Activated T-helper 1 cell treated with anti-CD3 and anti-CD28 coated beads, Interleukin-12 subunit alpha, Interleukin-12 subunit beta, Interleukin-2, Interleukin-4 antibody, amounts not matched to agents 30 ng/mL and 10 ng/mL and 1 ng/mL, durations not matched to agents 14 hours and 24 hours and 36 hours (primary cell): ENCODE measurements at regions of chr21 and their contacts with region 1.

Region 1: GRCh38 chr21:14591882-14592281 is 45.8 kb upstream of the SAMSN1 start:
- DNase-seq: no peak
- H3K4me3 Mint-ChIP-seq: no peak overlapping the region
- H3K27ac Mint-ChIP-seq: peak overlapping the region; percentile 83
- H3K4me1 Mint-ChIP-seq: peaks cover 54% of the 10 kb centered on the region
- H3K27me3 Mint-ChIP-seq: no peaks in the 10 kb centered on the region

Region 2: GRCh38 chr21:14454016-14455009 is 137.6 kb before region 1 on chr21:
- intact Hi-C with region 1: loop called (anchors 10 kb)
- DNase-seq: no peak
- H3K4me3 Mint-ChIP-seq: peak overlapping the region; percentile 62
- H3K27ac Mint-ChIP-seq: peak overlapping the region; percentile 92
- H3K4me1 Mint-ChIP-seq: peaks cover 74% of the 10 kb centered on the region
- H3K27me3 Mint-ChIP-seq: no peaks in the 10 kb centered on the region

Region 3: DNA sequence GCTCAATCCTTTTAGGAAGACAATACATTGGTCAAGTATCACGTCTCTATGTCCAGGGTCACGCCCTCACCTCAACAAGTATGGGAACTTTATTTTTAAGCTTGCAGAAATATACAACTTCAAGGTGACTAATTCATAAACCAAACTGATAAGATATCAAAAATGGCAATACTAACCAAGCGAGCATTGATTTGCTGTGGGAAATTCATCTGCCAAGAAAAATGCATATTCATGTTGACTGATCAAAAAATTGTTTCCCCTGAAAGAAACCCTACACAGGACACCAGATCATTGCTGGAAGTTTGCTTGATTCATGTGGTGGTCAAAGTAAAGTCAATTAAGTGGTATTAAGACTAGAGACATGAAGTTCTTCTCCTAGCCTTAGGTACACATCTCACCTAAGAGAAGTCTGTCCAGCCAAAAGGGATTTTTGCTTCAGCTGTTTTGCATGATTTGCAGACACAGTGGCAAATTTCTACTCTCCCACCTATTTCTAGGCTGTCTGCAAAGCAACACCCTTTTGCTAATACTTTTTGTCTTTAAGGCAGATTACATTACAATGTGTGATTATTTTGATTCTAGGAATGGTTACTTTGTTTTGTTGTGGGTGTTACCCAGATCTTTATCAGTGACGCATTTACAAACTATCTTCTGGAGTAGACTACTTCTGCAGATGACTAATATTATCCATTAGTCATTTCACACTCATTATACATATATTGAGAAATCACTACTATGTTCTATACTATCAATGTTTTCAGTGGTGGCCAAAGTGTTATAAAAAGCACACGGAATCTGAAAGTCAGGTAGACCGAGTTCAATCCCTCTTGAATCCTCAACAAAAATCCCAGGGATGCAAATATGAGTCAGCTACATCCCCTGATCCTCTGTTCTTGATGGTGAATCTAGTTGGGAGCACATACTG is 58.1 kb before region 1 on chr21:
- intact Hi-C with region 1: loop called (anchors 1 kb)
- DNase-seq: peak; percentile 22
- H3K4me3 Mint-ChIP-seq: peak overlapping the region; percentile 86
- H3K27ac Mint-ChIP-seq: peak overlapping the region; percentile 99
- H3K4me1 Mint-ChIP-seq: peaks cover 79% of the 10 kb centered on the region
- H3K27me3 Mint-ChIP-seq: no peaks in the 10 kb centered on the region

Region 4: DNA sequence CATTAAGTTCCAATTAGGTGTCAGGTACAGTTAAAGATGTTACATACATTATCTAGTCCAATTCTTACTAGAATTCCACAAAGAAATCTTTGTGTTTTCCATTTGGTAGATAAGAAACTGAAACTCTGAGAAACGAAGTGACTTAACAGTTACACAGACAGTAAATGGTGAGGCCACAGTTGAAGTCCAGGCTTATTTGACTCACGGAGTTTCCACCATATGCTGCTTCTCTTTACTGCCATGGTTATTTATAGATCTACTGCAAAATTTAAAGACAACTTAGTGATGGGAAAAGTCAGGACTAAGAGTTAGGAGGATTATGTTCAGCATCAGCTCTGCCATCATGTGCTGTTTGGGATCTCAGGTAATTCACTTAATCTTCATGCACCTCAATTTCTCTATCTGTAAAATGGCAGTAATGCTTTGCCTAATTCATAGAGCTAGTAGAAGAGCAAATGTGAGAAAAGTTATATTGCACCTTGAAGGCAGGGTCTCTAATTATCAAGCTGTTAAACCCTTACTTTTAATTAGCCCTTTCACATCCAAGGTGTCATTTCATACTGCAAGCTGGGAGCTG is 19.6 kb before region 1 on chr21:
- intact Hi-C with region 1: loop called (anchors 1 kb)
- DNase-seq: no peak
- H3K4me3 Mint-ChIP-seq: peak overlapping the region; percentile 67
- H3K27ac Mint-ChIP-seq: peak overlapping the region; percentile 89
- H3K4me1 Mint-ChIP-seq: peaks cover 60% of the 10 kb centered on the region
- H3K27me3 Mint-ChIP-seq: no peaks in the 10 kb centered on the region

Region 5: GRCh38 chr21:14620152-14620551 is 28.3 kb after region 1 on chr21:
- intact Hi-C with region 1: loop called (anchors 1 kb)
- DNase-seq: peak; percentile 4
- H3K4me3 Mint-ChIP-seq: no peak overlapping the region
- H3K27ac Mint-ChIP-seq: peak overlapping the region; percentile 74
- H3K4me1 Mint-ChIP-seq: peaks cover 37% of the 10 kb centered on the region
- H3K27me3 Mint-ChIP-seq: peaks cover 3% of the 10 kb centered on the region

Region 6: DNA sequence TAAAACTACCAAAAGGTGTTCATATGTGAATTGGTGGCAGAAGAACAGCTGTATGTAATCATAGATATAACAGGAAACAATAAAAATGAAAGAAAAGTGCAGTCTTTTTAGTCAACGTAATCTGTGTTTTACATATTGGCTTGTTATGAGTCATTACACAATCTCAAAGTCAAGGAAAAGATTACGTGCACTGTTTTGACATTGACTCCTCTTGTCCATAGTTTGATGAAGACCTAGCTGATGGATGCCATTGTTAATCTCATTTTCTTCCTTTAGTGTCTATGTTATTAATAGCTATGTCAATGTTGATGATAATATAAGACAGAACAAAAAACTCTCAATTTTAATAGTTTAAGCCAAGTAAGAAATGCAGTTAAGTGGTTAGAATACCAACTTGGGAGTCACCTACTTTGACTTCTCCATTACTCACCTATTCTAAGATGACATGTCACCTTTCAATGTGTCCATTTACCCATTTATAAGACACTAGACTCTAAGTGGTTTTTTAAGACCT is 38.7 kb after region 1 on chr21:
- intact Hi-C with region 1: loop called (anchors 1 kb)
- DNase-seq: no peak
- H3K4me3 Mint-ChIP-seq: no peak overlapping the region
- H3K27ac Mint-ChIP-seq: peak overlapping the region; percentile 72
- H3K4me1 Mint-ChIP-seq: peaks cover 14% of the 10 kb centered on the region
- H3K27me3 Mint-ChIP-seq: peaks cover 2% of the 10 kb centered on the region

Region 7: GRCh38 chr21:14675774-14676530 is 84.1 kb after region 1 on chr21:
- intact Hi-C with region 1: loop called (anchors 2 kb)
- DNase-seq: no peak
- H3K4me3 Mint-ChIP-seq: peak overlapping the region; percentile 74
- H3K27ac Mint-ChIP-seq: peak overlapping the region; percentile 97
- H3K4me1 Mint-ChIP-seq: peaks cover 49% of the 10 kb centered on the region
- H3K27me3 Mint-ChIP-seq: no peaks in the 10 kb centered on the region